Posterior vena cava (tissue), 2 donors: ENCODE measurements at regions of chr12 and their contacts with region 1.

Region 1: DNA sequence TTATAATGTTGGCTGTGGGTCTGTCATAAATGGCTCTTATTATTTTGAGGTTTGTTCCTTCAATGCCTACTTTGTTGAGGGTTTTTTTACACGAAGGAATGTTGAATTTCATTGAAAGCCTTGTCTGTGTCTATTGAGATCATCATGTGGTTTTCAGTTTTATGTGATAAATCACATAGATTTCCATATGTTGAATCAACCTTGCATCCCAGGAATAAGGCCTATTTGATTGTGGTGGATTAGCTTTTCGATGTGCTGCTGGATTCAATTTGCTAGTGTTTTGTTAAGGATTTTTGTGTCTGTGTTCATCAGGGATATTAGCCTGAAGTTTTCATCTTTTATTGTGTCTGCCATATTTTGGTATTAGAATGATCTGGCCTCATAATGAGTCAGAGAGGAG is 27.6 kb downstream of the SLC2A13 start:
- DNase-seq: no peak

Region 2: GRCh38 chr12:40168868-40169267 is 90.6 kb after region 1 on chr12:
- intact Hi-C with region 1: loop called in 1 of 2 experiments (anchors 5 kb)
- DNase-seq: no peak